Gastrocnemius medialis (tissue), 4 donors: ENCODE measurements at regions of chr11 and their contacts with region 1.

Region 1: DNA sequence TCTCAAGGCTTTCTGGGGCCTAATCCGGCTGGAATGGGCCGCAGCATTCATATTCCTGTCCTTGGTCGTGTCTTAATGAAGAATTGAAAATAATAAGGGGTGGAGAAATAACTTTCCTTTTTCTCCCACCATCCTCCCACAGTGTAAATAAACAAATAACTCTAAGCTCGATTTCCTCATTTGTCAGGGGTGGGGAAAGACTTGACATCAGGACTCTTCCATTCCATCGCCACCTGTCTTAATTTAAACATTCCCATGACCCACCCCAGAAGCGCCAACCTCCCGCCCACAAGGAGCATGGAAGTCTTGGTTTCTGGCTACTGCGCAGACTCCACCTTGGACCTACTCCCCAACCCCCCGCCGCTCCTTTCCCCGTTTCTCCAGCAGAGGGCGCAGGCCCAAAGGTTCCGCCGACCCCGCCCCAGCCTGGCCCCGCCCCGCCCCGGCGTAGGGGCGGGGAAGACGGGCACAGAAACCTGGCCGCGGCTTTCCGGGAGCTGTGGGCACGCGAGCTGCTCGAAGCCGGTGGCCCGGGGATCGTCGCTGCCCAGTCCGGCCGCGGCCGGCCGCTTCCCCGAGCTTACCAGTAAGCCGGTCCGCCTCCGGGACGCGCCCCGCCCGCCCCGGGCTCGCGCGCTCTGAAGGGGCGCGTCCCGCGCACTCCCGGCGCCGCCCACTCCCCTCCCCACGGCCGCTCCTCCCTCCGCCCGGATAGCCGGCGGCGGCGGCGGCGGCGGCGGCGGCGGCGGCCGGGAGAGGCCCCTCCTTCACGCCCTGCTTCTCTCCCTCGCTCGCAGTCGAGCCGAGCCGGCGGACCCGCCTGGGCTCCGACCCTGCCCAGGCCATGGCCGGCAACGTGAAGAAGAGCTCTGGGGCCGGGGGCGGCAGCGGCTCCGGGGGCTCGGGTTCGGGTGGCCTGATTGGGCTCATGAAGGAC is at the start of gene CBL:
- DNase-seq: peak; percentile 90 to 92
- ATAC-seq: peak; percentile 93 to 96
- H3K4me3 ChIP-seq: peak within 1 kb of the TSS; percentile 73 to 98 (median 90)
- H3K27ac ChIP-seq: peak within 1 kb of the TSS; percentile 89 to 98 (median 94)
- H3K4me1 ChIP-seq: peaks cover 15 to 16% of the 10 kb centered on the region in 2 donors
- H3K27me3 ChIP-seq: no peaks in the 10 kb centered on the region
- CTCF ChIP-seq: peak; percentile 80 to 99 (median 92)
- POLR2A ChIP-seq: peak; percentile 83 to 84
- total RNA-seq, gene CBL: 3.0 to 6.7 (median 4.5) TPM

Region 2: GRCh38 chr11:119095066-119095880 is 110.6 kb before region 1 on chr11:
- in situ Hi-C with region 1: loop called in 1 of 4 experiments (anchors 5 kb)
- intact Hi-C with region 1: no loop called
- DNase-seq: peak; percentile 99 to 100
- ATAC-seq: peak; percentile 94
- H3K4me3 ChIP-seq: peak overlapping the region; percentile 69 to 99 (median 88)
- H3K27ac ChIP-seq: peak overlapping the region; percentile 91 to 98 (median 94)
- H3K4me1 ChIP-seq: peaks cover 17 to 24% of the 10 kb centered on the region in 2 donors
- H3K27me3 ChIP-seq: no peaks in the 10 kb centered on the region
- CTCF ChIP-seq: peak in 4 of 5 experiments; percentile 18 to 70 (median 35)
- POLR2A ChIP-seq: peak; percentile 99 to 100

Region 3: DNA sequence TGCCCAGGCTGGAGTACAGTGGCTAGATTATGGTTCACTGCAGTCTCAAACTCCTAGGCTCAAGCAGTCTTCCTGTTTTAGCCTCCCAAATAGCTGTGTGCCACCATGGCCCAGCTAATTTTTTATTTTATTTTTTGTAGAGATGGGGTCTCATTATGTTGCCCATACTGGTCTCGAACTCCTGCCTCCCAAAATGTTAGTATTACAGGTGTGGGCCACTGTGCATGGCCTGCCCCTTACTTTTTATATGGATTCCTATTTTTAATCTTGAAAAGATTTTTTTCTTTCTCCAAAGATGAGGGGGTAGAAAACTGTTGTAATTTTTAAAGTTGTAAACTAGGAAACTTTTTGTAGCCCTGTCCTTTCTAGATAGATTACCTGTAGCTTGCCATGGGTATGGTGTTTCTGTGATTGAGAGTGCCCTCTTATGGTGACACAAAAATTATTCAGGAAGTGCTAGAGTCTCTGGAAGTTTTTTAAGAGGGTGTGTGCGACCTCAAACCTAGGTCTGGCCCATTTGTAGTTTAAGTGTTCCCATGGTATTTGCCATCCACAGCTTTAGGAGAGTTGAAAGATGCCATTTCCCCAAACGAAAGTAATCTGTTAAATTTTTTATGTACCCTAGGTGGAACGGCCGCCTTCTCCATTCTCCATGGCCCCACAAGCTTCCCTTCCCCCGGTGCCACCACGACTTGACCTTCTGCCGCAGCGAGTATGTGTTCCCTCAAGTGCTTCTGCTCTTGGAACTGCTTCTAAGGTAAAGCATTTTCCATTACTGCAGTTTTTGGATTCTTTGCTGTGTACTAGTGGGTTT is 78.7 kb after region 1 on chr11:
- in situ Hi-C with region 1: no loop called
- intact Hi-C with region 1: loop called (anchors 1 kb)
- DNase-seq: no peak
- ATAC-seq: peak; percentile 62 to 69
- H3K4me3 ChIP-seq: no peak overlapping the region
- H3K27ac ChIP-seq: no peak overlapping the region
- H3K4me1 ChIP-seq: peaks cover 0 to 2% of the 10 kb centered on the region in 2 donors
- H3K27me3 ChIP-seq: no peaks in the 10 kb centered on the region
- CTCF ChIP-seq: peak in 3 of 5 experiments; percentile 3 to 42 (median 31)
- POLR2A ChIP-seq: no peak

Region 4: DNA sequence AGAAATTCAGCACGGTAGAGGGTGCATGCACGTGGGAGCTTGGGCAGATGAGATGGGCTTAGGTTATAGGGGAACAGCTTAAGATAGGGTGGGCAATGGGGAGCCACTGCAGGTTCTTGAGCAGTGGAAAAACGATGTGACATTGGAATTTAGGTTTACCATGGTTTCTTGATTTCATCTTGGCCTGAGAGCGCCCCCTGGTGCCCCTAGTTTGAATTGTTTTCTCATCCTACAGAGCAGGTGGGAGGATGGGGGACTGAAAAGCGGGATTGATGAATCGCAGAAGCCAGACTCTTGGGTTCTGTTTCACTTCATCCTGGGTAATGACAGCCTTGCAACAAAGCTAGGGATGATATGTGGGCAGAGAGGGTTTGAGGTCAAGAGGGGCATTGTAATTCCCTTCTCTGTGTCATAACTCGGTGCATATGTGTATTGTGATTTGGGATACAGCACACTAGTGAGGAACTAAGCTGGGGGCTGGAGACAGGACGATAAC is 117.7 kb after region 1 on chr11:
- in situ Hi-C with region 1: loop called in 1 of 4 experiments (anchors 10 kb)
- intact Hi-C with region 1: loop called (anchors 1 kb)
- DNase-seq: peak in 1 of 2 donors; percentile 65
- ATAC-seq: peak; percentile 21 to 50
- H3K4me3 ChIP-seq: no peak overlapping the region
- H3K27ac ChIP-seq: peak overlapping the region in 1 of 4 donors; percentile 85
- H3K4me1 ChIP-seq: peaks cover 8 to 20% of the 10 kb centered on the region in 2 donors
- H3K27me3 ChIP-seq: peaks cover 0 to 10% (median 0%) of the 10 kb centered on the region in 3 donors
- CTCF ChIP-seq: peak; percentile 64 to 86 (median 81)
- POLR2A ChIP-seq: no peak

Region 5: DNA sequence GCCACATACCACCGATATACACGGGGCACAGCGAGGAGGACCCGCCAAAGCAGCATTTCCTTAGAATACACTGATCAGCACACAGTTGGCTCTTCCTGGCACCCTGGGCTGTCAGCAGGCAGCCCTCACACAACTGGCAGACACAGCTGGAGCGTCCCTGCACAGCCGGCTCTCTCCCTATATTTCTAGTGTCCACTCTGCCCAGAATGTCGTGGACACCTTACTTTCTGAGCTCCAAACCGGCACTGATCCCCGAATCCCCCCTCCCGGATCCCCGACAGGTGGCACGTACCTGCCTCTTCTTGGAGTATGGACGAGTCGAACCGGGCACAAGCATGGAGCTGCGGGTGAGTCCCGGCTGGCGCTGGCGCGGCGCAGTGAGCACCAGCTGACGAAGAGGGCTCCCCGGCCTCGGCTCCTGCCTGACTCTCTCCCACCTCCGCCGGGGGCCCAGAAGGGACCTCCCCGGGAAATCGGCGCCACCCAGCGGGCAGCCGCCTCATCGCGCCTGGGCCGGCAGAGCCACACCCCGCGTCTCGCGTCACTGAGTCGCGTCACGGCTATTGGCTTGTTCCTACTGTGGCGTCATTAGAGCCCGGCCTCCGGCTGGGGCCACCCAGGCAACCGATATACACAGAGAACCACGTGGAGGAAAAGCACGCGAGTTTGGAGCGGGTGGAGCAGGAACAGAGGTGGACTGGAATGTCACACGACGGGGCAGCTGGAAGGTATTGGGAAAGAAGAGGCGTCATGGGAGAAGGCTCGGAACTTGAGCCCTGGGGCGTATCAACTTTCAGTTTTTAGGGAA is 175.5 kb after region 1 on chr11 and contains the start of gene USP2:
- in situ Hi-C with region 1: no loop called
- intact Hi-C with region 1: loop called (anchors 1 kb)
- DNase-seq: peak; percentile 98
- ATAC-seq: peak; percentile 69 to 83
- H3K4me3 ChIP-seq: peak within 1 kb of the TSS; percentile 56 to 73 (median 62)
- H3K27ac ChIP-seq: peak within 1 kb of the TSS; percentile 96 to 99 (median 98)
- H3K4me1 ChIP-seq: peaks cover 42 to 45% of the 10 kb centered on the region in 2 donors
- H3K27me3 ChIP-seq: no peaks in the 10 kb centered on the region
- CTCF ChIP-seq: peak; percentile 81 to 97 (median 94)
- POLR2A ChIP-seq: peak; percentile 91 to 93
- total RNA-seq, gene USP2: 19.4 to 105 (median 46.0) TPM